Transverse colon (tissue), 4 donors: ENCODE measurements at regions of chr10 and their contacts with region 1.

Region 1: DNA sequence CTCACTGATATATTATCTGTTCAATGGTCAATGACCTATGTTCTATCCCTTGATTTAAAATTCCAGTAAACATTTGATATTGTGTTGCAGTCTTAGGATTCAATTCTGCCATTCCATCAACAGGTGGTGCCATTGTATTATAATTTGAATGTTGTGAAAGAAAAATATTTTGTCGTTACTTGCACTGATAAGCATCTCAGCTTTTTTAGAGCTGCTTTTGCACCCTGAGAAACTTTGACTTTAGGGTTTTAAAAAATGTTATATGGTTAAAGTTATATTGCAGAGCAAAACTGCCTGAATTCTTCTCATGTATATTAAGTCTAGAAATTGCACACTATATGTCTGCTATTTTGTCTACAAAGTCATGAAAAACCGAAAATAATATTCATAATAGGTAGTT is 18.8 kb upstream of the MINDY3 start:
- DNase-seq: no peak
- H3K4me3 ChIP-seq: no peak overlapping the region
- H3K27ac ChIP-seq: no peak overlapping the region
- H3K4me1 ChIP-seq: no peaks in the 10 kb centered on the region
- H3K27me3 ChIP-seq: peaks cover 13% of the 10 kb centered on the region
- CTCF ChIP-seq: peak; percentile 37 to 51 (median 43)
- EP300 ChIP-seq: no peak
- POLR2A ChIP-seq: no peak

Region 2: GRCh38 chr10:15901889-15902288 is 22.8 kb after region 1 on chr10:
- in situ Hi-C with region 1: no loop called
- intact Hi-C with region 1: no loop called
- DNase-seq: no peak
- H3K4me3 ChIP-seq: no peak overlapping the region
- H3K27ac ChIP-seq: no peak overlapping the region
- H3K4me1 ChIP-seq: no peaks in the 10 kb centered on the region
- H3K27me3 ChIP-seq: peaks cover 11% of the 10 kb centered on the region
- CTCF ChIP-seq: no peak
- EP300 ChIP-seq: no peak
- POLR2A ChIP-seq: no peak

Region 3: GRCh38 chr10:16520900-16521299 is 641.8 kb after region 1 on chr10:
- in situ Hi-C with region 1: loop called in 2 of 4 experiments (anchors 25 kb)
- intact Hi-C with region 1: no loop called
- DNase-seq: no peak
- H3K4me3 ChIP-seq: peak overlapping the region; percentile 9 to 53 (median 42)
- H3K27ac ChIP-seq: no peak overlapping the region
- H3K4me1 ChIP-seq: peaks cover 5 to 25% (median 20%) of the 10 kb centered on the region in 4 donors
- H3K27me3 ChIP-seq: peaks cover 49% of the 10 kb centered on the region
- CTCF ChIP-seq: no peak
- EP300 ChIP-seq: no peak
- POLR2A ChIP-seq: no peak

Region 4: GRCh38 chr10:16545116-16545736 is 666.2 kb after region 1 on chr10:
- in situ Hi-C with region 1: loop called in 1 of 4 experiments (anchors 25 kb)
- intact Hi-C with region 1: no loop called
- DNase-seq: no peak
- H3K4me3 ChIP-seq: no peak overlapping the region
- H3K27ac ChIP-seq: no peak overlapping the region
- H3K4me1 ChIP-seq: no peaks in the 10 kb centered on the region
- H3K27me3 ChIP-seq: no peaks in the 10 kb centered on the region
- CTCF ChIP-seq: peak in 4 of 5 experiments; percentile 21 to 44 (median 34)
- EP300 ChIP-seq: no peak
- POLR2A ChIP-seq: no peak

Region 5: GRCh38 chr10:16765509-16766375 is 886.7 kb after region 1 on chr10:
- in situ Hi-C with region 1: loop called in 1 of 4 experiments (anchors 25 kb)
- intact Hi-C with region 1: no loop called
- DNase-seq: no peak
- H3K4me3 ChIP-seq: no peak overlapping the region
- H3K27ac ChIP-seq: no peak overlapping the region
- H3K4me1 ChIP-seq: no peaks in the 10 kb centered on the region
- H3K27me3 ChIP-seq: no peaks in the 10 kb centered on the region
- CTCF ChIP-seq: no peak
- EP300 ChIP-seq: no peak
- POLR2A ChIP-seq: no peak

Region 6: GRCh38 chr10:16777473-16778370 is 898.7 kb after region 1 on chr10:
- in situ Hi-C with region 1: loop called in 3 of 4 experiments (anchors 25 kb)
- intact Hi-C with region 1: no loop called
- DNase-seq: no peak
- H3K4me3 ChIP-seq: no peak overlapping the region
- H3K27ac ChIP-seq: peak overlapping the region in 1 of 4 donors; percentile 71
- H3K4me1 ChIP-seq: peaks cover 0 to 13% (median 1%) of the 10 kb centered on the region in 4 donors
- H3K27me3 ChIP-seq: no peaks in the 10 kb centered on the region
- CTCF ChIP-seq: peak; percentile 76 to 82 (median 79)
- EP300 ChIP-seq: no peak
- POLR2A ChIP-seq: no peak